HepG2 (cell line): ENCODE measurements at regions of chr9 and their contacts with region 1.

Region 1: GRCh38 chr9:35732122-35732799 is at the starts of genes CREB3 and TLN1:
- DNase-seq: peak; percentile 96
- ATAC-seq: peak; percentile 90
- H3K4me3 ChIP-seq: peak within 1 kb of the TSS; percentile 92 to 98 (median 92)
- H3K27ac ChIP-seq: peak within 1 kb of the TSS; percentile 95
- H3K4me1 ChIP-seq: peaks cover 53% of the 10 kb centered on the region
- H3K27me3 ChIP-seq: no peaks in the 10 kb centered on the region; a peak in 1 of 5 replicates
- CTCF ChIP-seq: peak; percentile 83
- EP300 ChIP-seq: peak in 1 of 2 experiments; percentile 49; a peak in 2 of 4 replicates
- POLR2A ChIP-seq: peak; percentile 72 to 76
- RAD21 ChIP-seq: peak; percentile 39; the same call in 1 of the 2 replicates
- total RNA-seq, gene CREB3: 32.2 and 34.2 TPM in 2 replicates
- total RNA-seq, gene TLN1: 51.8 and 53.7 TPM in 2 replicates

Region 2: DNA sequence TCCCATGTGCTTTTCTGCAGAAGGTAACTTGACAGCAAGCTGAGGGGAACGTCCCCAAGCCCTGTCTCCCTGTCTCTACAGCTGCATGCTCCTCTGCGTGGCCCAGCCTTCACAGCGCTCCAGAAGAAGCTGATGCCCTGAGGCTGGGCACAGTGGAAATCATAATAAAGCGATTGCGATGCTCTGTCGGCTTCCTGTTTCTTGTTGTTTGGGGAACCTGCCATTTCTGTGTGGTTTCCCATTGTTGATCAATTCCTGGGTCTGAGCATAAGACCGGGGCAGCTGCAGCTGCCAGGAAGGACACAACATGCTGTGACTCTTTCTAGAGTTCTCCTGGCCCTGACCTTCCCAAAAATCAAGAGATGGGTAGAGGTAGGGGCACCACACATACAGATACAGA is 749.9 kb before region 1 on chr9:
- CTCF ChIA-PET with region 1: no interaction called
- POLR2A ChIA-PET with region 1: no interaction called
- in situ Hi-C with region 1: no loop called
- intact Hi-C with region 1: no loop called
- DNase-seq: no peak
- ATAC-seq: no peak
- H3K4me3 ChIP-seq: no peak overlapping the region
- H3K27ac ChIP-seq: no peak overlapping the region
- H3K4me1 ChIP-seq: no peaks in the 10 kb centered on the region
- H3K27me3 ChIP-seq: peaks cover 0 to 47% of the 10 kb centered on the region in 2 experiments; a peak in 4 of 5 replicates
- CTCF ChIP-seq: no peak
- EP300 ChIP-seq: no peak
- POLR2A ChIP-seq: no peak
- RAD21 ChIP-seq: no peak

Region 3: GRCh38 chr9:35489313-35490154 is 242.7 kb before region 1 on chr9 and contains the start of gene RUSC2:
- CTCF ChIA-PET with region 1: no interaction called
- POLR2A ChIA-PET with region 1: interaction called, 3 read pairs
- in situ Hi-C with region 1: no loop called
- intact Hi-C with region 1: loop called (anchors 10 kb)
- DNase-seq: peak; percentile 75
- ATAC-seq: peak; percentile 84
- H3K4me3 ChIP-seq: peak within 1 kb of the TSS; percentile 76 to 97 (median 87)
- H3K27ac ChIP-seq: peak within 1 kb of the TSS; percentile 71
- H3K4me1 ChIP-seq: peaks cover 30% of the 10 kb centered on the region
- H3K27me3 ChIP-seq: no peaks in the 10 kb centered on the region
- CTCF ChIP-seq: peak; percentile 77
- EP300 ChIP-seq: peak; percentile 3 to 26; a peak in 1 of 4 replicates
- POLR2A ChIP-seq: peak; percentile 61 to 71
- RAD21 ChIP-seq: peak; percentile 46; the same call in 1 of the 2 replicates
- total RNA-seq, gene RUSC2: 2.3 and 3.3 TPM in 2 replicates

Region 4: GRCh38 chr9:35646533-35647265 is 85.6 kb before region 1 on chr9:
- CTCF ChIA-PET with region 1: no interaction called
- POLR2A ChIA-PET with region 1: interaction called, 11 read pairs
- in situ Hi-C with region 1: no loop called
- intact Hi-C with region 1: no loop called
- DNase-seq: peak; percentile 78
- ATAC-seq: peak; percentile 95
- H3K4me3 ChIP-seq: peak overlapping the region; percentile 70 to 83 (median 72)
- H3K27ac ChIP-seq: peak overlapping the region; percentile 67
- H3K4me1 ChIP-seq: peaks cover 55% of the 10 kb centered on the region
- H3K27me3 ChIP-seq: peaks cover 2 to 22% of the 10 kb centered on the region in 2 experiments; a peak in 3 of 5 replicates
- CTCF ChIP-seq: peak; percentile 98
- EP300 ChIP-seq: no peak
- POLR2A ChIP-seq: peak; percentile 64 to 81
- RAD21 ChIP-seq: peak; percentile 93

Region 5: GRCh38 chr9:35664531-35665470 is 67.5 kb before region 1 on chr9 and contains the start of gene ARHGEF39:
- CTCF ChIA-PET with region 1: no interaction called
- POLR2A ChIA-PET with region 1: interaction called, 31 read pairs
- in situ Hi-C with region 1: loop called (anchors 5 kb)
- intact Hi-C with region 1: no loop called
- DNase-seq: peak; percentile 81
- ATAC-seq: peak; percentile 83
- H3K4me3 ChIP-seq: peak within 1 kb of the TSS; percentile 64 to 85 (median 78)
- H3K27ac ChIP-seq: peak within 1 kb of the TSS; percentile 73
- H3K4me1 ChIP-seq: peaks cover 80% of the 10 kb centered on the region
- H3K27me3 ChIP-seq: no peaks in the 10 kb centered on the region
- CTCF ChIP-seq: peak; percentile 84
- EP300 ChIP-seq: peak in 1 of 2 experiments; percentile 14; a peak in 1 of 4 replicates
- POLR2A ChIP-seq: peak in 1 of 2 experiments; percentile 75; a peak in 1 of 4 replicates
- RAD21 ChIP-seq: peak; percentile 79
- total RNA-seq, gene ARHGEF39: 10.4 and 11.2 TPM in 2 replicates

Region 6: DNA sequence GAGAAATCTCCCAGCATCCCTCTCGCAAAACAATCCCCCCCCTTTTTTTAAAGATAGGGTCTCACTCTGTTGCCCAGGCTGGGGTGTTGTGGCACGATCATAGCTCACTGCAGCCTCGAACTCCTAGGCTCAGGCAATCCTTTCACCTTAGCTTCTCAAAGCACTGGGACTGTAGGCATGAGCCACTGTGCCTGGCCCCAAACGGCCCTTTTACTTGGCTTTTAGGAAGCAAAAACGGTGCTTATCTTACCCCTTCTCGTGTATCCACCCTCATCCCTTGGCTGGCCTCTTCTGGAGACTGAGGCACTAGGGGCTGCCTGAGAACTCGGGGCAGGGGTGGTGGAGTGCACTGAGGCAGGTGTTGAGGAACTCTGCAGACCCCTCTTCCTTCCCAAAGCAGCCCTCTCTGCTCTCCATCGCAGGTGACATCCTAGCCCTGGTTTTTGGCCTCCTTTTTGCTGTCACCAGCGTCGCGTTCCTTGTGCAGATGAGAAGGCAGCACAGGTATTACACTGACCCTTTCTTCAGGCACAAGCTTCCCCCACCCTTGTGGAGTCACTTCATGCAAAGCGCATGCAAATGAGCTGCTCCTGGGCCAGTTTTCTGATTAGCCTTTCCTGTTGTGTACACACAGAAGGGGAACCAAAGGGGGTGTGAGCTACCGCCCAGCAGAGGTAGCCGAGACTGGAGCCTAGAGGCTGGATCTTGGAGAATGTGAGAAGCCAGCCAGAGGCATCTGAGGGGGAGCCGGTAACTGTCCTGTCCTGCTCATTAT is 51.7 kb before region 1 on chr9:
- CTCF ChIA-PET with region 1: no interaction called
- POLR2A ChIA-PET with region 1: no interaction called
- in situ Hi-C with region 1: no loop called
- intact Hi-C with region 1: no loop called
- DNase-seq: no peak
- ATAC-seq: no peak
- H3K4me3 ChIP-seq: no peak overlapping the region
- H3K27ac ChIP-seq: no peak overlapping the region
- H3K4me1 ChIP-seq: peaks cover 6% of the 10 kb centered on the region; the same call in 1 of the 2 replicates
- H3K27me3 ChIP-seq: no peaks in the 10 kb centered on the region
- CTCF ChIP-seq: no peak
- EP300 ChIP-seq: no peak
- POLR2A ChIP-seq: no peak
- RAD21 ChIP-seq: no peak

Region 7: DNA sequence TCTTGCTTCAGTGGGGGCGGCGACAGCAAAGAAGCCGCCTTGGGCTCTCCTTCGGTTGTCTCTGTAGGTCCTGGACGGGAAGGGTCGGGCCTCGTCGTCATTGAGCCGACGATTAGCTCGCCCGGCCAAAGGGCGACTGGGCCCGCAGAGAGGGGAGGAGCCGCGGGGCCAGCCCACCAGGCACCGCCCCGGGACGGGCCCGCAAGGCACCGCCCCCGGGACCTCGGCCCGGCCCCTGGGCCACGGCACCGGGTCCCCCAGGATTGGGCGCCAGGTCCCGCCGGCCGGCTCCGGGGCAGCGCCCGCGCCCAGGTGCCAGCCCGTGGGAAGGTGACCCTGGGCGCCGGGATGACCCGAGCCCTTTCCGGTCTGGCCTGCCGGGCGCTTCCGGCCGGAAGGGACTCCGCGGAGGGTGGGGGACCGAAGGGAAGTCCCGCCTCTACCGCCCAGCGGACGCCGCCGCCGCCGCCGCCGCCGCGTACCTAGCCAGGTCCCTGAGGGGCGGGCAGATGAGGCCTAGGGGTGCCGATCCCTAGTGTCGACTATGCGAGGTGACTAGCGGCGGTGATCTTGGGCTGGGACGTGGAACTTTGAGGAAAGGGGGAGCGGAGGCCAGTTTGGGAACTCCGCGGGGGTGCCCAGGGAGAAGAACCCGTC is 16.7 kb after region 1 on chr9 and contains the starts of genes GBA2 and RGP1:
- CTCF ChIA-PET with region 1: no interaction called
- POLR2A ChIA-PET with region 1: interaction called, 102 read pairs
- in situ Hi-C with region 1: no loop called
- intact Hi-C with region 1: loop called (anchors 2 kb)
- DNase-seq: peak; percentile 77
- ATAC-seq: peak; percentile 90
- H3K4me3 ChIP-seq: peak within 1 kb of the TSS; percentile 95 to 99 (median 98)
- H3K27ac ChIP-seq: peak within 1 kb of the TSS; percentile 89
- H3K4me1 ChIP-seq: peaks cover 42% of the 10 kb centered on the region
- H3K27me3 ChIP-seq: no peaks in the 10 kb centered on the region; a peak in 2 of 5 replicates
- CTCF ChIP-seq: no peak; the same call in 1 of the 2 replicates
- EP300 ChIP-seq: 0 out of 4 replicates have a peak, but pooled peaks of 1 of the 2 experiments have one; percentile 15
- POLR2A ChIP-seq: peak; percentile 59 to 68
- RAD21 ChIP-seq: no peak; the same call in 1 of the 2 replicates
- total RNA-seq, gene GBA2: 24.4 and 37.5 TPM in 2 replicates
- total RNA-seq, gene RGP1: 12.6 and 12.7 TPM in 2 replicates

Region 8: DNA sequence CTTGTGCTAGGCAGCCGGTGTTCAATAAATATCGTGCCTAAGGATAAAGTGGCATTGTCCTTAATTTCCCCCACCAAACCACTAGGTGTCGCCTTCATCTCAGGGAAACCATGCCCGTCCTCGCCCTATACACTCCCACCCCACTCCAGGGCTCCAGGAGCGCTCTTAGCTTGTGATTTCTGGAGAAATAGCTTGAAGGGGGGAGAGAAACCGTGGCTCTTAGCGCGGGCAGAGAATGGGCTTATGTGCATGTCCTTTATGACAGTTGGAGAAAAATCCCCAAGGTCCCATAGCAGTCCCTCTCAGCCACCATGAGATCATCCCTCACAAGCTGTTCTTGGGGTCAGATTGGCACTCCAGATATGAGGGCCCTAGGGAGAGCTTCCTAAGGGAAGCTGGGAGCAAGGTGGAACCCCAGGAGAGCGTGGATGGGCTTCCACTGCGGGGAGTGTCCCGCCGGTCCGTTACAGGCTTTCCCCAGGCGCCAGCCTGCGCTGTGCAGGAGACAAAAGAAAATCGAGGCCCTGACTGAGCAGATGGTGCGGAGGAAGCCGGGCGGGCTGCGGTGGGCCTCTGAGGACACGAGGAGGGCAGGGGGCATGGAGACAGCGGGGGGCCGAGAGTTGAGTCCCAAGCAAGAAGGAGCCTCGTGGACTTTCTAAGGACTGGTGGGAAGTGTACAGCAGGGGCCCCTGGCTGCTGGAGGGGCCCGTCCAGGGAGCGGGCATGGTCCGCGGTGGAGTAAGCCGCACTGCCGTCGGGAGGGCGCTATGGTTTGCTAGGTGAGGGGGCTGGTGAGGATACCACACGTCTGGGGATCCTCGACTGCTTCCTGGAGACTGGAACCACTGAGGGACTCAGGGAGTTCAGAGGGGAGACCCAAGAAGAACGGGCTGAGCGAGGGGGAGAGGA is 58.4 kb after region 1 on chr9:
- CTCF ChIA-PET with region 1: no interaction called
- POLR2A ChIA-PET with region 1: no interaction called
- in situ Hi-C with region 1: no loop called
- intact Hi-C with region 1: loop called (anchors 1 kb)
- DNase-seq: peak; percentile 49
- ATAC-seq: peak; percentile 94
- H3K4me3 ChIP-seq: no peak overlapping the region
- H3K27ac ChIP-seq: no peak overlapping the region
- H3K4me1 ChIP-seq: no peaks in the 10 kb centered on the region; the same call in 1 of the 2 replicates
- H3K27me3 ChIP-seq: no peaks in the 10 kb centered on the region
- CTCF ChIP-seq: peak; percentile 94
- EP300 ChIP-seq: no peak
- POLR2A ChIP-seq: no peak
- RAD21 ChIP-seq: peak; percentile 82

Region 9: DNA sequence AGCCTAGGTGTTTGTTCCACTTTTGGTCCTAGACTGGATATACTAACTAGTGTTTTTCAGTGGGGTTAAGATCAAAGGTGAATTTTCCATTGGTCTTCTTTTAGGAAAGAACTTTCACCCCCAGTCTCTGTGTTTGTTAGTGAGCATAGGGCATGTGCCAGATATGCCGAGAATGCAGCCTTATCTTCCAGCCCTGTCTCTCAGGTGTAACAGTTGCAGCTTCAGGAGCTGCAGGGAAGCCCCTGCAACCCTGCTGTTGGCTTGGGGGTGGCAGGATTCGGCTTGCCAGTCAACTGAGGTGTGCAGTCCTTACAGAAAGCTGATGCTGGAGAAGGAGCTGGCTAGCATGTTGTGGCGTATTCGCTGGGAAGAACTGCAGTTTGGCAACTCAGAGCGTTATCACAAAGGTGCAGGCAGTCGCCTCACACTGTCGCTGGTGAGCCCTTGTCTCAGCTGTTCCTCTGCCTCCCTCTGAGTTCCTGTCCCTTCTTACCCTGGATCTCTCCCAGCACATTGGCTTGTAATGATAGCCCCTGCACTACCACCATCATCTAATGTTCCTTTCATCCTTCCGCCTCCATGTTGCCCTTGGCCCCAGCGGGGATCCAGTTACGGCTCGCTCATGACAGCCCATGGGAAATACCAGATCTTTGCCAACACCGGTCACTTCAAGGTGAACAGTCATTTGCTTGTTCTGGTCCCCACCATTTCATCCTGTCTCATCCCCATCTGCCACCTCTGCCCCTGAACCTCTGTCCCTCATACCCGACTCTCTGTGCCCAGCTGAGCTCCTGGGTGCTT is 69.3 kb after region 1 on chr9:
- CTCF ChIA-PET with region 1: no interaction called
- POLR2A ChIA-PET with region 1: no interaction called
- in situ Hi-C with region 1: no loop called
- intact Hi-C with region 1: no loop called
- DNase-seq: peak; percentile 56
- ATAC-seq: peak; percentile 94
- H3K4me3 ChIP-seq: peak overlapping the region in 1 of 3 experiments; percentile 15; a peak in 2 of 6 replicates
- H3K27ac ChIP-seq: peak overlapping the region; percentile 69
- H3K4me1 ChIP-seq: peaks cover 27% of the 10 kb centered on the region
- H3K27me3 ChIP-seq: no peaks in the 10 kb centered on the region
- CTCF ChIP-seq: 0 out of 2 replicates have a peak, but pooled peaks have one; percentile 12
- EP300 ChIP-seq: peak in 1 of 2 experiments; percentile 60; a peak in 2 of 4 replicates
- POLR2A ChIP-seq: peak in 1 of 2 experiments; percentile 30; a peak in 1 of 4 replicates
- RAD21 ChIP-seq: no peak

Region 10: DNA sequence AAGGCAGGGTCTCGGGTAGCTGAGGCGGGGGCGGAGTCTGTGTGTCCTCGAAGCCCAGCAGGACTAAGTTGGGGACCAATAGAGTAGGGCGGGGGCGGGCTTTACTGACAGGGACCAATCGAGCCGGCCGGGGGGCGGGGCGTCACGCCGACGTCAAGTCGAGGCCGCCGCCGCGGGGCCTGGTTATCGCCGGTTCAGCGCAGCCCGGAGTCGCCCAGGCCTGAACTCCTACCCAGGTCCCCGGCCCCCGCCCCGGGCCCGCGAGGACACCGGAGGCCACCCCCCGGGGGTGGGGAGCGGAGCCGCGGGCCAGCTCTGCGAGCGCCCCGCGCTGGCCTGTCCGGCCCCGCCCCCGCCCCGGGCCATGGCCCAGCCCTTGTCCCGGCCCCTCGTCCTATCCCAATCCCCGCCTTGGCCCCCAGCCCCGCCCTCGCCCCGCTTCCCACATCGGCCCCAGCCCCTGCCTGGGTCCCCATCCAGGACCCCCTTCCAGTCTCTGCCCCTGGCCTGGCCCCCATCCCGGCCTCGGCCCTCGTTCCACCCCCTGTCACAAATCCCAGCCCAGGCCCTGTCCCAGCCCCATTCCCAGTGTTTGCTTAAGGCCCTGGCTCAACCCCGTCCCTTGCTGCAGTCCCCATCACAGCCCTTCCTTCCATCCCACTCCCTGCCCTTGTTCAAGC is 97.0 kb after region 1 on chr9 and contains the start of gene TMEM8B:
- CTCF ChIA-PET with region 1: no interaction called
- POLR2A ChIA-PET with region 1: interaction called, 3 read pairs
- in situ Hi-C with region 1: no loop called
- intact Hi-C with region 1: loop called (anchors 5 kb)
- DNase-seq: peak; percentile 83
- ATAC-seq: peak; percentile 90
- H3K4me3 ChIP-seq: peak within 1 kb of the TSS; percentile 61 to 81 (median 73)
- H3K27ac ChIP-seq: peak within 1 kb of the TSS; percentile 44
- H3K4me1 ChIP-seq: peaks cover 45% of the 10 kb centered on the region
- H3K27me3 ChIP-seq: no peaks in the 10 kb centered on the region
- CTCF ChIP-seq: no peak
- EP300 ChIP-seq: no peak
- POLR2A ChIP-seq: no peak
- RAD21 ChIP-seq: no peak
- total RNA-seq, gene TMEM8B: 1.5 and 2.1 TPM in 2 replicates